Activated CD4-positive, alpha-beta T cell treated with anti-CD3 and anti-CD28 coated beads for 36 hours (primary cell): ENCODE measurements at regions of chr9 and their contacts with region 1.

Region 1: DNA sequence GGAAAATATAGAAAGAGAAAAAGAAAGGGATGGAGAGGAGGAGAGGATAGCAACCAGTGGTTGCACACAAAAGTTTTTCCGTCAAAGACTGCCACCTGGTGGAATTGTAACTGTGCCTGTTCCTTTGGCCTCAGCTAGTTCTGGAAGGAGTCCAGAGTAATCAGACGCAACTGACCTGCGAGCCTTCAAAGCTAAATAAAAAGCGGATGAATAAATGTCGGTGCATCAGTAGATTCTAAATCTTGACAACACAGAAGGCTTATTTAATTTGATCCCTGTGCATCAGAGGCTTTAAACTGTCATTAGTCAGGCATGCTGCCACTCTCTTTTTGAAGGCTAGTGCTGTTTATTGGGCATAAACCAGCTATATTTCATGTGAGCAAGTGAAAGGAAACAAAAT is 132.9 kb upstream of the ACO1 start:
- DNase-seq: peak; percentile 59
- ATAC-seq: no peak
- H3K4me3 Mint-ChIP-seq: no peak overlapping the region
- H3K27ac Mint-ChIP-seq: no peak overlapping the region
- H3K4me1 Mint-ChIP-seq: no peaks in the 10 kb centered on the region
- H3K27me3 Mint-ChIP-seq: peaks cover 2% of the 10 kb centered on the region

Region 2: GRCh38 chr9:31119882-31120454 is 1131.6 kb before region 1 on chr9:
- CTCF ChIA-PET with region 1: no interaction called
- POLR2A ChIA-PET with region 1: no interaction called
- intact Hi-C with region 1: loop called in 1 of 2 experiments (anchors 1 kb)
- DNase-seq: peak; percentile 46
- ATAC-seq: peak; percentile 53
- H3K4me3 Mint-ChIP-seq: no peak overlapping the region
- H3K27ac Mint-ChIP-seq: no peak overlapping the region
- H3K4me1 Mint-ChIP-seq: peaks cover 7% of the 10 kb centered on the region
- H3K27me3 Mint-ChIP-seq: no peaks in the 10 kb centered on the region

Region 3: GRCh38 chr9:31639451-31639850 is 612.1 kb before region 1 on chr9:
- CTCF ChIA-PET with region 1: no interaction called
- POLR2A ChIA-PET with region 1: no interaction called
- intact Hi-C with region 1: loop called in 1 of 2 experiments (anchors 10 kb)
- DNase-seq: no peak
- ATAC-seq: no peak
- H3K4me3 Mint-ChIP-seq: no peak overlapping the region
- H3K27ac Mint-ChIP-seq: no peak overlapping the region
- H3K4me1 Mint-ChIP-seq: peaks cover 4% of the 10 kb centered on the region
- H3K27me3 Mint-ChIP-seq: peaks cover under 1% of the 10 kb centered on the region

Region 4: GRCh38 chr9:31799953-31800609 is 451.5 kb before region 1 on chr9:
- CTCF ChIA-PET with region 1: interaction called, 3 read pairs
- POLR2A ChIA-PET with region 1: no interaction called
- intact Hi-C with region 1: loop called in 1 of 2 experiments (anchors 10 kb)
- DNase-seq: no peak
- ATAC-seq: no peak
- H3K4me3 Mint-ChIP-seq: no peak overlapping the region
- H3K27ac Mint-ChIP-seq: no peak overlapping the region
- H3K4me1 Mint-ChIP-seq: peaks cover 9% of the 10 kb centered on the region
- H3K27me3 Mint-ChIP-seq: no peaks in the 10 kb centered on the region